Heart right ventricle (tissue), 16 donors: ENCODE measurements at regions of chr6 and their contacts with region 1.

Region 1: DNA sequence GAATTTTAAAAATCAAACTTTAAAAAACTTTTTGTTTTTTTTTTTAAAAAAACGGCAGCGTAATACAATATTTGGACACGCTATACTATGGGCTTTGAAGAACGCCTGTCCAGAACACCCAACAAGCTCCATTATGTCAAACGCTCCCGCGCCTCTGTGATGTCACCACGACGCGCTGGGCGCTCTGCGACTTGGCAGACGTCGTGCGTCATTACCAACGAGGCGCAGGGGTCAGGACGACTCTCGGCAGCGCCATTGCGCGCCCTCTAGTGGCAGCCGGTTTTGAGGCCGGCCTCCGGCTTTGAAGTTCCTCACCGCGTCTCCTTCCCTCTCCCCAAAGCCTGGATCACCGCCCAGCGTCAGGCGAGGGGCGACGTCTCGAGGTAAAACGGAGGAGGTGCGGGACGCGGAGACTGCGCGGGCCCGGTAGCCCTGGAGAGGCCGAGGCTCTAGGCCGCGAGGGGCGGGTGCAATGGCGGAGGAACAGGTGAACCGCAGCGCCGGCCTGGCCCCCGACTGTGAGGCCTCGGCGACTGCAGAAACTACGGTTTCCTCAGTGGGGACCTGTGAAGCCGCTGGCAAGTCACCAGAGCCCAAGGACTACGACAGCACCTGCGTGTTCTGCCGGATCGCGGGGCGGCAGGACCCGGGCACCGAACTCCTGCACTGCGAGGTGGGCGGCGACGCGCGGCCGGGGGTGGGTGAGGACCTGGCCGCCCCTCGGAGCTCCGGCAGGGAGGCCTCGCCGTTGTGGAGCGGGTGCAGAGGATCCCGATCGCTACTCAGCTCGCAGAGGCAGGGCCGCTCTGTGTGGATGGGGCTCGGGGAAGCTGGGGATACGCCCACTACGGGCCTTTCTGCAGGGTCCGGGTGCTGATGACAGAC is at the start of gene HINT3:
- DNase-seq: peak; percentile 98 to 99
- ATAC-seq: peak; percentile 97 to 98 (median 98)
- H3K4me3 ChIP-seq: peak within 1 kb of the TSS; percentile 70 to 100 (median 84)
- H3K27ac ChIP-seq: peak within 1 kb of the TSS; percentile 85 to 97 (median 94)
- H3K4me1 ChIP-seq: peaks cover 0 to 30% (median 24%) of the 10 kb centered on the region in 9 donors
- H3K27me3 ChIP-seq: no peaks in the 10 kb centered on the region
- CTCF ChIP-seq: peak; percentile 94 to 100 (median 99)
- total RNA-seq, gene HINT3: 29.8 to 41.6 (median 33.8) TPM

Region 2: DNA sequence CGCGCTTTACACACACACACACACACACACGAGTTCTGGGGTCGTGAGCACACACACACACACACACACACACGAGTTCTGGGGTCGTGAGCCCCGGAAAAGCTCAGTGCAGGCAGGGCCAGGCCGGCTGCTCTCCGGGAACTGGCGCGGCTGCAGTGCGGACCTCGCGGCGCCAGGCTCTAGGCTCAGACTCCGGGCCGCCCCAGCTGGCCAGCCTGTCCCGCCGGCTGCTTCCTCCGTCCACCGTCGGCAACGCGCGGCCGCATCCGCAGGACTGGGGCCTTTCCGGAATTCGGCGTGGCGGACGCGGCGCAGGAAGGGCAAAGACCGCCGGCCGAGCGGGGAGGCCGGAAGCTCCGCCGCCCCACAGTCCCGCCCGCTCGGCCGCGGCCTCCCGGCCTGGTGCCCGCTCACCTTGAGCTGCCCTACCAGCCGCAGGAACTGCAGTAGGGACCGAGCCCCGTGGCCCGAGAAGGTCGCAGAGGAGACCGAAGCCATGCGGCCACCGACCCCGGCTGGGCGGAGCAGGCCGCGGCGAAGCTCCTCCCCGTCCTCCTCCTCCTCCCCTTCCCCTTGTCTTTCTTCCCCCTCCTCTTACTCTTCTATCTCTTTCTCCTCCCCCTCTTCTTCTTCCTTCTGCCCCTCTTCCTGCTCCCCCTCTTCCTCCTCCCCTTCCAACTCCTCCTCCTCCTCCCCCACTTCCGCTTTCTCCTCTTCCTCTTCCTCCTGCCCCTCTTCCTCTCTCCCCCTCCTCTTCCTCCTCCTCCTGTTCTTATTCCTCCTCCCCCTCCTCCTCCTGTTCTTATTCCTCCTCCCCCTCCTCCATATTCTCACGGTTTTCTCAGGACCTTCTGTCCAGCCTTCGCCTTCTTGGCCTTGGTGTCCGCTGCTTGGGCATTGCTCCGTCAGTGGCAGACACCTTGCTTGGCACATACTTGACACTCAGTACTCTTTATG is 655.0 kb before region 1 on chr6 and contains the start of gene HDDC2:
- intact Hi-C with region 1: loop called in 2 of 10 experiments (anchors 5 kb)
- DNase-seq: peak; percentile 80 to 84
- ATAC-seq: peak; percentile 87 to 96 (median 92)
- H3K4me3 ChIP-seq: peak within 1 kb of the TSS; percentile 52 to 84 (median 76)
- H3K27ac ChIP-seq: peak within 1 kb of the TSS; percentile 86 to 97 (median 95)
- H3K4me1 ChIP-seq: peaks cover 0 to 37% (median 20%) of the 10 kb centered on the region in 9 donors
- H3K27me3 ChIP-seq: no peaks in the 10 kb centered on the region
- CTCF ChIP-seq: peak in 1 of 9 donors; percentile 4
- total RNA-seq, gene HDDC2: 70.9 to 107 (median 95.1) TPM

Region 3: GRCh38 chr6:125584468-125585029 is 372.2 kb before region 1 on chr6:
- intact Hi-C with region 1: no loop called
- DNase-seq: peak; percentile 44 to 60
- ATAC-seq: peak; percentile 81 to 97 (median 93)
- H3K4me3 ChIP-seq: no peak overlapping the region
- H3K27ac ChIP-seq: peak overlapping the region in 9 of 10 donors; percentile 45 to 77 (median 58)
- H3K4me1 ChIP-seq: peaks cover 0 to 30% (median 4%) of the 10 kb centered on the region in 9 donors
- H3K27me3 ChIP-seq: peaks cover 0 to 3% (median 0%) of the 10 kb centered on the region in 7 donors
- CTCF ChIP-seq: peak in 5 of 9 donors; percentile 11 to 57 (median 46)

Region 4: GRCh38 chr6:125790358-125791150 is 166.2 kb before region 1 on chr6 and contains the start of gene NCOA7:
- intact Hi-C with region 1: loop called in 8 of 10 experiments (anchors 1 to 10 kb)
- DNase-seq: peak; percentile 85 to 86
- ATAC-seq: peak; percentile 89 to 97 (median 95)
- H3K4me3 ChIP-seq: peak within 1 kb of the TSS; percentile 68 to 96 (median 87)
- H3K27ac ChIP-seq: peak within 1 kb of the TSS; percentile 92 to 98 (median 96)
- H3K4me1 ChIP-seq: peaks cover 10 to 54% (median 33%) of the 10 kb centered on the region in 9 donors
- H3K27me3 ChIP-seq: no peaks in the 10 kb centered on the region
- CTCF ChIP-seq: peak in 1 of 9 donors; percentile 14
- total RNA-seq, gene NCOA7: 6.2 to 21.3 (median 11.1) TPM

Region 5: DNA sequence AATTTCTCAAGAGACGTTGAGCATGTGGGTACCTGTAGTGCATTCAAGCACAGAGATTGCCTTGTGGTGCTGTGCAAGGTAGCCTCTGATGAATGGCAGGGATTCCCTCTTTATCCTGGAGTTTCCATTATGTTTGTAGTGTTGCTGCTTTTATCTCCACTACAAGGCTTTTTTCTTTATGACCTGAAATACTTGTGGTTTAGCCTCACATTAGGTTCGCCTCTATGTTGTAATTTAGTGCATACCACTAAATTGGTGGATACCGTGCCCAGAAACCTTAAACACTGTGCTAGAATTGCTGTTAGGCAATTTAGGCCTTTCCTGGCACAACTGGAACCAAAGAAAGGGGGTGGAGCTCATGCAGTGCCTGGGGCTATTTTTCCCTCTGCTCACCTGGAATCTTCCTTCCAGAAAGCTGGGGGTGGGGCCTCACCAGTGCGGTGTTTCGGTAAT is 89.2 kb before region 1 on chr6:
- intact Hi-C with region 1: loop called in 2 of 10 experiments (anchors 5 to 10 kb)
- DNase-seq: no peak
- ATAC-seq: no peak
- H3K4me3 ChIP-seq: no peak overlapping the region
- H3K27ac ChIP-seq: no peak overlapping the region
- H3K4me1 ChIP-seq: peaks cover 0 to 22% (median 5%) of the 10 kb centered on the region in 9 donors
- H3K27me3 ChIP-seq: no peaks in the 10 kb centered on the region
- CTCF ChIP-seq: no peak

Region 6: DNA sequence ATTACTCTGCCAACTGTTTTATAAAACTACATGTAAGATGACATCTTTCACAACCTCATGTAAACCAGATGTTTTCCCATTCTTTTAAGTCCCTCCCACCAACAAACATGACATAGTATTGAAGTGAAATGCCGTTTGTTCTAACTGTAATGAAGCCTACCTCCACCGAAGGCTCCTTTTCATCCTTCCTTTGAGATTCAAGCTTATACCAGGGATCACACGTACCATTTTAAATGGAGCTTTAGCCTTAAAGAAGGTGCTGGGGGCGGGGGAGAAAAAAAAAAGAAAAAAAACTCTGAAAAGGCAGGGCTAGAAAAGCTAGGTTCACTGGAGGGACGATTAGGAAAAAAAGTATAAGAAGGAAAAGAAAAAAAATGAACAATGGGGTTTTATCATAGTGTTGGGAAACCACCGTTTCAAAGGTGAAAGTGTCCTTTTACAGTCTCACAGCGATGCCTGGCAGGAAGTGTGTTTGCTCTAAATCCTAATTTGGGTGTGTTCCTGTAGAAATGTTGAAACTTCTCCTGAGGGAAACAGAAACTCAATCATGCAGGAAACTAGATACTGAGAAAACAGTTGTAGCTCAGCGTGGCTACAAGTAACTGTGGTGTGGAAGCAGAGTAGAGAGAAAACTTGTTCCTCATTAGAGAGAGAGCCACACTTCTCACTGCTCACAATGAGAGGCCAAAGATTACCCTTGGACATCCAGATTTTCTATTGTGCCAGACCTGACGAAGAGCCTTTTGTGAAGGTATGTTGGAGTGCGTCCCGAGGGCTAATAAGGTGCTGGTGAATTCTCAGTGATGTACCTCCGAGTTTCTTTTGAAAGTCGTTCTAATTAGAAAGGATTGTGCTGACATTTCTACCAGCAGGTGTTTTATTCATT is 37.8 kb before region 1 on chr6:
- intact Hi-C with region 1: loop called in 3 of 10 experiments (anchors 5 kb)
- DNase-seq: peak in 1 of 2 donors; percentile 30
- ATAC-seq: peak; percentile 55 to 91 (median 86)
- H3K4me3 ChIP-seq: peak overlapping the region in 9 of 10 donors; percentile 6 to 49 (median 38)
- H3K27ac ChIP-seq: peak overlapping the region in 8 of 10 donors; percentile 59 to 84 (median 68)
- H3K4me1 ChIP-seq: peaks cover 0 to 49% (median 2%) of the 10 kb centered on the region in 9 donors
- H3K27me3 ChIP-seq: no peaks in the 10 kb centered on the region
- CTCF ChIP-seq: no peak

Region 7: GRCh38 chr6:126020305-126021050 is 63.7 kb after region 1 on chr6:
- intact Hi-C with region 1: no loop called
- DNase-seq: no peak
- ATAC-seq: no peak
- H3K4me3 ChIP-seq: no peak overlapping the region
- H3K27ac ChIP-seq: no peak overlapping the region
- H3K4me1 ChIP-seq: no peaks in the 10 kb centered on the region
- H3K27me3 ChIP-seq: no peaks in the 10 kb centered on the region
- CTCF ChIP-seq: no peak

Region 8: GRCh38 chr6:126199466-126199865 is 242.7 kb after region 1 on chr6:
- intact Hi-C with region 1: no loop called
- DNase-seq: no peak
- ATAC-seq: no peak
- H3K4me3 ChIP-seq: no peak overlapping the region
- H3K27ac ChIP-seq: no peak overlapping the region
- H3K4me1 ChIP-seq: no peaks in the 10 kb centered on the region
- H3K27me3 ChIP-seq: no peaks in the 10 kb centered on the region
- CTCF ChIP-seq: no peak

Region 9: DNA sequence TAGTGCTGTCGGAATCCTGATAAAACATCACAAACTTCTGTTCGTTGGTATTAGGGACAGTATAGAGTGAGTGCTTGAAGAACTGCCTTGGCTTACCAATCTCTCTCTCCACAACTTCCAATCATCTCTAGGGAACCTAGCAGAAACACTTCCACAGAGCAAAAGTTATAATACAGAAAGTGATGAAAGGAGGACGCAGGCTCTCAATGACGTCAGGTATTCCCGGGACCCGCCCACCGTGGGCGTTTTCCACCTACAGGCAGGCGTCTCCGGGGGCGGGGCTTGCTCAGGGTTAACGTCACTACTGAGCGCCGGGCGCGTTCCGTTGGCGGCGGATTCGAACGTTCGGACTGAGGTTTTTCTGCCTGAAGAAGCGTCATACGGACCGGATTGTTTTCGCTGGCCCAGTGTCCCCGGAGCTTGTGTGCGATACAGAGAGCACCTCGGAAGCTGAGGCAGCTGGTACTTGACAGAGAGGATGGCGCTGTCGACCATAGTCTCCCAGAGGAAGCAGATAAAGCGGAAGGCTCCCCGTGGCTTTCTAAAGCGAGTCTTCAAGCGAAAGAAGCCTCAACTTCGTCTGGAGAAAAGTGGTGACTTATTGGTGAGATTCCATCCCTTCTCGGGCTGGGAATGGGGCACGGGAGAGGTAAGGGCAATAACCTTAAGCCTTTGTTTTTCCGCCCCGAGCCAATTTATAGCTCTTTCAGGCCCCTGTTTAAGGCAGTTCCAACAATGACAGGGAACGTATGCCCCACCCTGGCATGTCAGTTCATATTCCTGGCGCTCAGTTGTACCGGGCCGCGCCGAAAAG is 383.3 kb after region 1 on chr6 and contains the start of gene CENPW:
- intact Hi-C with region 1: no loop called
- DNase-seq: peak; percentile 82 to 88
- ATAC-seq: peak; percentile 78 to 98 (median 88)
- H3K4me3 ChIP-seq: peak within 1 kb of the TSS; percentile 4 to 70 (median 63)
- H3K27ac ChIP-seq: peak within 1 kb of the TSS in 1 of 10 donors; percentile 57
- H3K4me1 ChIP-seq: peaks cover 0 to 25% (median 9%) of the 10 kb centered on the region in 9 donors
- H3K27me3 ChIP-seq: no peaks in the 10 kb centered on the region
- CTCF ChIP-seq: no peak
- total RNA-seq, gene CENPW: 0.50 to 6.1 (median 0.98) TPM in 6 of 10 donors, not detected in the others